ENCODE measurements at regions of chr10 and their contacts with region 1.

Region 1: GRCh38 chr10:11270135-11270857 is 252.6 kb downstream of the CELF2 start:
- DNase-seq: peak in 9 of 10 donors; percentile 54 to 77 (median 70)
- H3K4me3 ChIP-seq: peak overlapping the region in 2 of 59 donors; percentile 13 to 14
- H3K27ac ChIP-seq: peak overlapping the region in 29 of 59 donors; percentile 6 to 67 (median 30)
- H3K27me3 ChIP-seq: peaks cover 0 to 31% (median 0%) of the 10 kb centered on the region in 45 donors
- CTCF ChIP-seq: peak; percentile 48 to 88 (median 81)

Region 2: GRCh38 chr10:11017570-11018431 is 252.5 kb before region 1 on chr10 and contains the start of gene CELF2:
- intact Hi-C with region 1: loop called in 1 of 2 experiments (anchors 10 kb)
- DNase-seq: peak in 5 of 10 donors; percentile 54 to 86 (median 69)
- H3K4me3 ChIP-seq: peak within 1 kb of the TSS; percentile 43 to 85 (median 68)
- H3K27ac ChIP-seq: peak within 1 kb of the TSS in 58 of 59 donors; percentile 53 to 95 (median 88)
- H3K27me3 ChIP-seq: peaks cover 0 to 69% (median 0%) of the 10 kb centered on the region in 45 donors
- CTCF ChIP-seq: no peak
- total RNA-seq, gene CELF2: 93.7 to 263 (median 189) TPM

Region 3: GRCh38 chr10:11113156-11113555 is 157.1 kb before region 1 on chr10:
- intact Hi-C with region 1: loop called in 1 of 2 experiments (anchors 5 kb)
- DNase-seq: no peak
- H3K4me3 ChIP-seq: no peak overlapping the region
- H3K27ac ChIP-seq: peak overlapping the region in 2 of 59 donors; percentile 16 to 24
- H3K27me3 ChIP-seq: peaks cover 0 to 19% (median 0%) of the 10 kb centered on the region in 45 donors
- CTCF ChIP-seq: peak in 42 of 56 donors; percentile 10 to 63 (median 36)

Region 4: DNA sequence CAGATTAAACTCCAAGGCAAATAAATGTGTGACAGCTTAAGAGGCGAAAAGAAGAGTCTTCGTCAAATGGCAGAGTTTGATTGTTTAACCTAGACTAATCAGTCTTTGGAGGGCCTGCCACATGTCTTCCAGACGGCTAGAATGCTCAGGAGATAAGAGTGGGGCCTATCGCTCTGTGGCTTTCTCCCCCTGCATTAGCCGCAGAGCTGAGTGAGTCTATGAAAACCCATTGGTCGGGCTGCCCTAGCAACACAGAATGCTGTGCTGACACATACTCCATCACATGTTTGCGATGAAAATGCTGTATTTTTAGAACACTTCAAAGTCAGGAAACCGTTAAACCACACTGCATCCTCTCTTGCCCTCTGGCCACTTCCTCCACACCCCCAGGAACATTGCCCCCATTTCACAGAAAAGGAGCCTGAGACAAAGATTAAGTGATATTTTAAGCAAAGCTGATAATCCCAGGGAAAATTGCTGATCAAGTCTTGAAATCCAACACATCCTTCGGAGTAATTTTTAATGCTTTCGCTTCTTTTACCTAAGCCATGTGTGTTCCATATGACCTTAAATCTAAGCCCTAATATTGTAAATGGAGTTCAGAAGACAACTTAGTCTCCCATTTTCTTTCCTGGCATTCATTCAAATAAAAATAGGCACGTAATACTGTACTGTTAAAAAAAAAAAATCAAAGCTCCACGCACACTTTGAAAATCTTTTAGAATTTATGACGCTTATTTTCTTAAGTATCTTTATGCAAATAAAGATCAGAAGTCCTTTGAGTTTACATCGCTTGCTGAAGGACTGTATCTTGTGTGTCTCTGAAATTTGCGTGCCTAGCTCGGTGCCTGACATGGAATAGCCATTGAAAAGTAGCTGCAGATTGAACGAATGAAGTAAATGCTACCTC is 91.4 kb before region 1 on chr10:
- intact Hi-C with region 1: loop called (anchors 5 to 10 kb)
- DNase-seq: peak in 5 of 10 donors; percentile 48 to 78 (median 66)
- H3K4me3 ChIP-seq: peak overlapping the region in 16 of 59 donors; percentile 1 to 41 (median 22)
- H3K27ac ChIP-seq: peak overlapping the region in 55 of 59 donors; percentile 26 to 90 (median 73)
- H3K27me3 ChIP-seq: peaks cover 0 to 29% (median 0%) of the 10 kb centered on the region in 45 donors
- CTCF ChIP-seq: no peak

Region 5: DNA sequence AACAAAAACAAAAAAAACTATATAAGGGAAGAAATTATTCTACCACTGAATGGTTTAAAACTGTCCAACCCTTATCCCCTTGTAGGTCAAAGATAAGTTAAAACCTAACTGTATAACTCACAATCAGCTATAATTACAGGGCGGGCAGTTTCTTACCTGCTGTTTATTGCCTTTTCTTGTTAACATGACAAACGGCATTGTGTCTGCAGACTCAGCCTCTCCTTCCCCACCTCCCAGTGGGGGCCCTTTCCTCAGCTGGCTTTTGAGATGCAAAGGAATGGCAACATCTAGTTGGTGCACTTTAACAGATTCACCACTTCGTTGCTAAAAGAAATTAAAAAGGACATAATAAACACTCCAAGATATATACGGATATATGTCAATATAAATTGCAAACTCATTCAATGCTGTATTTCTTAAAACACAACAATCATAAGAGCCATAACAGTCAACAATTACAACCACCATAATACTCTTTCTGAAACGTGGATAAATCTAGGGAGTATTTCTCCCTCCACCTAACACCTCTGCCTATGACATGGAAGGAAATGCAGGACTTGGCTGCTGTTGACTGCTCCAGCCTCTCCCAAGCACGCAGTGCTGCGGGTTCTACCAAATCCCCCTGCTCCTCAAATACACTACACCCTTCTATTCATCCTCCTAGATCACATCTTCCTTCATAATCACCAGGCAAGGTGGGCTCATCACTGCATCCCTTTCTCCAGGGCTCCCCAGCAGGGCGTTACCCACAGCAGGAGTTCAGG is 666.3 kb after region 1 on chr10:
- intact Hi-C with region 1: no loop called
- DNase-seq: no peak
- H3K4me3 ChIP-seq: no peak overlapping the region
- H3K27ac ChIP-seq: no peak overlapping the region
- H3K27me3 ChIP-seq: no peaks in the 10 kb centered on the region
- CTCF ChIP-seq: no peak

Measured in dorsolateral prefrontal cortex (tissue), 120 donors.